ENCODE measurements at regions of chr12 and their contacts with region 1.

Region 1: GRCh38 chr12:26135010-26135420 is 10.2 kb upstream of the BHLHE41 start:
- DNase-seq: no peak
- H3K4me3 ChIP-seq: no peak overlapping the region
- H3K27ac ChIP-seq: no peak overlapping the region
- H3K4me1 ChIP-seq: no peaks in the 10 kb centered on the region
- H3K27me3 ChIP-seq: no peaks in the 10 kb centered on the region
- CTCF ChIP-seq: no peak
- POLR2A ChIP-seq: no peak

Region 2: GRCh38 chr12:26188127-26188526 is 53.1 kb after region 1 on chr12:
- intact Hi-C with region 1: loop called in 1 of 2 experiments (anchors 10 kb)
- DNase-seq: no peak
- H3K4me3 ChIP-seq: no peak overlapping the region
- H3K27ac ChIP-seq: no peak overlapping the region
- H3K4me1 ChIP-seq: no peaks in the 10 kb centered on the region
- H3K27me3 ChIP-seq: no peaks in the 10 kb centered on the region
- CTCF ChIP-seq: no peak
- POLR2A ChIP-seq: no peak

Region 3: GRCh38 chr12:26455936-26456574 is 321.0 kb after region 1 on chr12:
- intact Hi-C with region 1: no loop called
- DNase-seq: peak; percentile 34 to 83 (median 65)
- H3K4me3 ChIP-seq: no peak overlapping the region
- H3K27ac ChIP-seq: peak overlapping the region in 3 of 5 donors; percentile 41 to 69 (median 53)
- H3K4me1 ChIP-seq: peaks cover 6 to 24% of the 10 kb centered on the region in 2 donors
- H3K27me3 ChIP-seq: no peaks in the 10 kb centered on the region
- CTCF ChIP-seq: no peak
- POLR2A ChIP-seq: no peak